Activated CD8-positive, alpha-beta memory T cell treated with anti-CD3 and anti-CD28 coated beads, Interleukin-2, amount 10 ng/mL, durations not matched to agents 7 days and 5 days (primary cell): ENCODE measurements at regions of chr9 and their contacts with region 1.

Region 1: GRCh38 chr9:124852829-124853531 is at the start of gene WDR38:
- DNase-seq: peak; percentile 86
- ATAC-seq: peak; percentile 93
- H3K4me3 Mint-ChIP-seq: peak within 1 kb of the TSS; percentile 58
- H3K27ac Mint-ChIP-seq: no peak within 1 kb of the TSS
- H3K4me1 Mint-ChIP-seq: peaks cover 17% of the 10 kb centered on the region
- H3K27me3 Mint-ChIP-seq: peaks cover 11% of the 10 kb centered on the region
- total RNA-seq, gene WDR38: not detected

Region 2: GRCh38 chr9:124695280-124695890 is 157.6 kb before region 1 on chr9:
- CTCF ChIA-PET with region 1: no interaction called
- DNase-seq: no peak
- ATAC-seq: no peak
- H3K4me3 Mint-ChIP-seq: no peak overlapping the region
- H3K27ac Mint-ChIP-seq: no peak overlapping the region
- H3K4me1 Mint-ChIP-seq: no peaks in the 10 kb centered on the region
- H3K27me3 Mint-ChIP-seq: peaks cover 10% of the 10 kb centered on the region

Region 3: GRCh38 chr9:124764774-124765438 is 88.1 kb before region 1 on chr9:
- CTCF ChIA-PET with region 1: interaction called, 380 read pairs
- DNase-seq: no peak
- ATAC-seq: no peak
- H3K4me3 Mint-ChIP-seq: no peak overlapping the region
- H3K27ac Mint-ChIP-seq: no peak overlapping the region
- H3K4me1 Mint-ChIP-seq: peaks cover 8% of the 10 kb centered on the region
- H3K27me3 Mint-ChIP-seq: peaks cover 94% of the 10 kb centered on the region

Region 4: GRCh38 chr9:124782661-124783574 is 70.1 kb before region 1 on chr9:
- CTCF ChIA-PET with region 1: interaction called, 380 read pairs
- DNase-seq: peak; percentile 38
- ATAC-seq: no peak
- H3K4me3 Mint-ChIP-seq: no peak overlapping the region
- H3K27ac Mint-ChIP-seq: no peak overlapping the region
- H3K4me1 Mint-ChIP-seq: no peaks in the 10 kb centered on the region
- H3K27me3 Mint-ChIP-seq: peaks cover 5% of the 10 kb centered on the region

Region 5: GRCh38 chr9:124839612-124840299 is 13.2 kb before region 1 on chr9:
- CTCF ChIA-PET with region 1: interaction called, 35 read pairs
- DNase-seq: no peak
- ATAC-seq: no peak
- H3K4me3 Mint-ChIP-seq: no peak overlapping the region
- H3K27ac Mint-ChIP-seq: no peak overlapping the region
- H3K4me1 Mint-ChIP-seq: no peaks in the 10 kb centered on the region
- H3K27me3 Mint-ChIP-seq: peaks cover 23% of the 10 kb centered on the region

Region 6: GRCh38 chr9:124894741-124895170 is 41.8 kb after region 1 on chr9:
- CTCF ChIA-PET with region 1: interaction called, 18 read pairs
- DNase-seq: peak; percentile 66
- ATAC-seq: peak; percentile 83
- H3K4me3 Mint-ChIP-seq: no peak overlapping the region
- H3K27ac Mint-ChIP-seq: no peak overlapping the region
- H3K4me1 Mint-ChIP-seq: no peaks in the 10 kb centered on the region
- H3K27me3 Mint-ChIP-seq: no peaks in the 10 kb centered on the region